Activated naive CD8-positive, alpha-beta T cell treated with anti-CD3 and anti-CD28 coated beads, Interleukin-2, amount 10 ng/mL, durations not matched to agents 7 days and 5 days (primary cell): ENCODE measurements at regions of chr19 and their contacts with region 1.

Region 1: DNA sequence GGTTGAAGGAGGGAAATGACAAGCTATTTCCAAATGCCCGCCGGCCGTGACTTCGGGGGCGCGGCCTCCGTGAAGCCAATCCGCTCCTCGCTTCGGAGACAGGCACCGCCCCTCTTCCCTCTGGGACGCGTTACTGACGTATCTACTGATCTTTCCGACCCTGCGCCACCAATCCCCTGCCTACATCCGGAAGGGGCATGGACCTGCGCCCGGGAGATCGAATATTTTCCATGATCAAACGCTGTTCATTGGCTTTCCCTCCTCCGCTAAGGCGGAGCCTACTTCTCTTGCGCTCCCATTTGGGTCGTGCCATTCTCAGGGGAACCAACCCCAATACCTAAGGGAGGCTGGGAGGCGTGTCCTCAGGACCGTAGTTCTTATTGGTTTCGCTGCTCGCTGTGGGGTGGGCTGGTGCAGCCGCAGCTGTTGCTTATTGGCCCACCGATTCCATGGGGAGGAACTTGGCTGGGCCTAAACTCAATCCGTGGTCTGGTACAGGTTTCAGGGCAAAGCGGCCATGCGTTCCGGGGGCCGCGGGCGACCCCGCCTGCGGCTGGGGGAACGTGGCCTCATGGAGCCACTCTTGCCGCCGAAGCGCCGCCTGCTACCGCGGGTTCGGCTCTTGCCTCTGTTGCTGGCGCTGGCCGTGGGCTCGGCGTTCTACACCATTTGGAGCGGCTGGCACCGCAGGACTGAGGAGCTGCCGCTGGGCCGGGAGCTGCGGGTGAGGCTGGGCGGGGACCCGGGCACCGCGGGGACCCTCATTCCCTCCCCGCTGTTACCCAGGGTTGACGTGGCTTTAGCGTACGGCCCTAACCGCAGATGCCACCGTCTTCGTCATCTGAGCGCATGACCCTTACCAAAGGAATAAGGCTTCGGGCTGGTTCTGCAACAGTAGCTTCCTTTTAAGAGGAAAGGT is at the start of gene QPCTL:
- DNase-seq: peak; percentile 91
- ATAC-seq: peak; percentile 94
- H3K4me3 Mint-ChIP-seq: peak within 1 kb of the TSS; percentile 90
- H3K27ac Mint-ChIP-seq: peak within 1 kb of the TSS; percentile 86
- H3K4me1 Mint-ChIP-seq: peaks cover 15% of the 10 kb centered on the region
- H3K27me3 Mint-ChIP-seq: no peaks in the 10 kb centered on the region
- total RNA-seq, gene QPCTL: 9.3 to 9.7 TPM

Region 2: DNA sequence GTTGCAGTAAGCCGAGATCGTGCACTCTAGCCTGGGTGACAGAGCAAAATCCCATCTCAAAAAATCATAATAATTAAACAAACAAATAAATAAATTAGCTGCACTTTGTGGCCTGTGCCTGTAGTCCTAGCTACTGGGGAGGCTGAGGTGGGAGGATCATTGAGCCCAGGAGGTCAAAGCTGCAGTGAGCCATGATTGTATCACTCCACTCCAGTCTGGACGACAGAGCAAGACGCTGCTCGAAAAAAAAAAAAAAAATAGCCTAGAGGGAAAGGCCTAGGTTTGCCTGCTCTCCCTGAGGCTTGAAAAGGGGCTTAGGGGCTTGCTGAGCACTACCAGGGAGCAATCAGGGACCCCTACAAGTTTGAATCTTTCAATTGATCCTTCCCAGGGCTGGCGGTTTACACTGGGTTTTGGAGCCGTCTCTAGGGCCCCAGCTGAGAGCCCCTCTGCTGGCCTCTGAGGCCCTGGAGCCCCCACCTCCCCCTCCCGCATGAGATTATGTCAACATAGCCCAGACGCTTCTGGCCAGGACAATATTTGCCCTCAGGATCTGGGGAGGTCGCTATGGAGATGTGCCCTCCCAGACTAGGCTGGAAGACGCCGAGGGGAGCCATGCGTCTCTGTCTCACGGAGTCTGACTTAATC is 34.8 kb before region 1 on chr19:
- POLR2A ChIA-PET with region 1: no interaction called
- DNase-seq: no peak
- ATAC-seq: no peak
- H3K4me3 Mint-ChIP-seq: no peak overlapping the region
- H3K27ac Mint-ChIP-seq: no peak overlapping the region
- H3K4me1 Mint-ChIP-seq: no peaks in the 10 kb centered on the region
- H3K27me3 Mint-ChIP-seq: peaks cover 6% of the 10 kb centered on the region

Region 3: GRCh38 chr19:45677351-45678230 is 14.9 kb before region 1 on chr19:
- POLR2A ChIA-PET with region 1: interaction called, 18 read pairs
- DNase-seq: peak; percentile 82
- ATAC-seq: peak; percentile 59
- H3K4me3 Mint-ChIP-seq: peak overlapping the region; percentile 89
- H3K27ac Mint-ChIP-seq: peak overlapping the region; percentile 80
- H3K4me1 Mint-ChIP-seq: peaks cover 13% of the 10 kb centered on the region
- H3K27me3 Mint-ChIP-seq: peaks cover 6% of the 10 kb centered on the region

Region 4: GRCh38 chr19:45705115-45705514 is 12.7 kb after region 1 on chr19:
- POLR2A ChIA-PET with region 1: no interaction called
- DNase-seq: no peak
- ATAC-seq: no peak
- H3K4me3 Mint-ChIP-seq: no peak overlapping the region
- H3K27ac Mint-ChIP-seq: no peak overlapping the region
- H3K4me1 Mint-ChIP-seq: peaks cover 1% of the 10 kb centered on the region
- H3K27me3 Mint-ChIP-seq: no peaks in the 10 kb centered on the region

Region 5: GRCh38 chr19:45717166-45717982 is 24.9 kb after region 1 on chr19:
- POLR2A ChIA-PET with region 1: interaction called, 25 read pairs
- DNase-seq: peak; percentile 96
- ATAC-seq: peak; percentile 99
- H3K4me3 Mint-ChIP-seq: peak overlapping the region; percentile 95
- H3K27ac Mint-ChIP-seq: peak overlapping the region; percentile 89
- H3K4me1 Mint-ChIP-seq: peaks cover 23% of the 10 kb centered on the region
- H3K27me3 Mint-ChIP-seq: no peaks in the 10 kb centered on the region